ENCODE measurements at regions of chr4 and their contacts with region 1.

Region 1: DNA sequence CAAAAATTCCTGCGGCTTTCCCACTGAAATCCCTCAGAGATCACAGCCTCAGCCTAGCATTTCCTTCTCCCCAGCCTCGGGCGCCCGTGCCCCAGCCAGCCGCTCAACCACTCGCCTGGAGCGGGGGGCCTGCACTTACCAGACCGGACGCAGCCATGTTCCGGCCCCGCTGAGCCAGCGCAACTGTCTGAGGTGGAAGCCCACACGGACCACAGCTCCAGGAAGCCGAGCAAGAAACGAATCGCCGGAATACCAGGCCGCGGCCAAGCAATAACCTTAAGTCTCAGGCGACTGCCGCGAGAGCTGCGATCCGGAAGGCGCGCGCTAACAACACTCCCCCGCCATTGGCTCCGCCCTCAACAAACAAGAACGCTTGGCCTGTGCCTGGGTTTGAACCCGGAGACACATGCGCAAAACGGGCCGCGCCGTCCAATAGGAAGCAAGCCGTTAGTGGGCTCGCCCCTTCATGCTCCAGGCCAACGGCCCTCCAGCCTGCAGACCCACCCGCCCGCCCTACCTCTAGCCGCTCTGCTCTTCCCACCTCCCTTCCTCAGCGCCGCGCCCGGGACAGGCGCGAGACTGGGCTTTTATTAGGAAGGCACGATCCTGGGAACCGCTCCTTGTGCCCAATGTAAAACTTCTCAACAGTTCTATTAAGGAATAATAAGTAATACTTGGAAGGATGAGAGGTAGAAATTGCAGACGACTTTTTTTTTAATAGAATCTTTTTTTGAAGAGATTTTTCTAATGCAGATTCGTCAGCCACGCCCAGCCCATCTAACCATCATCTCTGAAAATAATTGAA is at the start of gene CENPC:
- H3K4me3 Mint-ChIP-seq: peak within 1 kb of the TSS; percentile 98
- H3K27ac Mint-ChIP-seq: peak within 1 kb of the TSS; percentile 99
- H3K4me1 Mint-ChIP-seq: peaks cover 21% of the 10 kb centered on the region
- H3K27me3 Mint-ChIP-seq: no peaks in the 10 kb centered on the region

Region 2: GRCh38 chr4:67603310-67604028 is 58.1 kb after region 1 on chr4:
- intact Hi-C with region 1: no loop called
- H3K4me3 Mint-ChIP-seq: no peak overlapping the region
- H3K27ac Mint-ChIP-seq: no peak overlapping the region
- H3K4me1 Mint-ChIP-seq: no peaks in the 10 kb centered on the region
- H3K27me3 Mint-ChIP-seq: no peaks in the 10 kb centered on the region

Region 3: GRCh38 chr4:67632492-67632891 is 87.1 kb after region 1 on chr4:
- intact Hi-C with region 1: loop called (anchors 5 kb)
- H3K4me3 Mint-ChIP-seq: peak overlapping the region; percentile 20
- H3K27ac Mint-ChIP-seq: peak overlapping the region; percentile 81
- H3K4me1 Mint-ChIP-seq: peaks cover 9% of the 10 kb centered on the region
- H3K27me3 Mint-ChIP-seq: no peaks in the 10 kb centered on the region

Region 4: DNA sequence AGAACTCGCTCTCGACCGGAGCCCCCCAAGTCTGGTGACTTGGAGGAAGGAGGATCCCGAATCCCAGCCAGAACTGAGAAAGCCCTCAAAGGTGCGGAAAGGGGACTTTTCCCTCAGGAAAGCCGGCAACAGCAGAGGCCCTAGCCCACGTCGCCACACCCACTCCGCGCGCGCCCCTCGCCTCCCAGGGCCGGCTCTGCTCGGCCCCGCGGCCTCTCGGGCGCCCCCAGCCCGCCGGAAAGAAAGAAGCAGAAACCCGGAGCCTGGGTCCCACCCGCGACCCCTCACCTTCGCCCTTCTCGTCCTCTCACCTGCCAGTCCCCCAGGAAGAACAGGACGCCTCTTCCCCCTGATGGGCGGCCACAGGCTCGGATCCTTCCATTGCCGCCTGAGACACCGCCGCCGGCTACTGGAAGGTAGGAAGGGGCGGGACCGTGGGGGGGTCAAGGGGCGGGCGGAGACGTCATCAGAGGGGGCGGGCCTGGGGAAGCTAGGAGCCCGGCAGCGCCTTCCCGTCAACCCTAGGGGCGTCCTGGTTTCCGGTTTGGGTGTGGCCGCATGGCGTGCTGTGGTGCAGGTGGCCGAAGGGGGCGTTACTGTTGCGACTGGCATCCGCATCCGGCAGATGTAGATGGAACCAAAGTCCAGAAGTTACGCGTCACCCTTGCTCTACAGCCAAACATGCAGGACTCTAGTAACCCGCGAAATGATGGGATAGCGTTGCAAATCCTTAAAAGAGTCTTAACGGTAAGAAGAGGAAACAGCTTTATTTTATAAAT is 155.5 kb after region 1 on chr4 and contains the start of gene UBA6:
- intact Hi-C with region 1: loop called (anchors 2 kb)
- H3K4me3 Mint-ChIP-seq: peak within 1 kb of the TSS; percentile 92
- H3K27ac Mint-ChIP-seq: peak within 1 kb of the TSS; percentile 93
- H3K4me1 Mint-ChIP-seq: peaks cover 39% of the 10 kb centered on the region
- H3K27me3 Mint-ChIP-seq: no peaks in the 10 kb centered on the region

Region 5: DNA sequence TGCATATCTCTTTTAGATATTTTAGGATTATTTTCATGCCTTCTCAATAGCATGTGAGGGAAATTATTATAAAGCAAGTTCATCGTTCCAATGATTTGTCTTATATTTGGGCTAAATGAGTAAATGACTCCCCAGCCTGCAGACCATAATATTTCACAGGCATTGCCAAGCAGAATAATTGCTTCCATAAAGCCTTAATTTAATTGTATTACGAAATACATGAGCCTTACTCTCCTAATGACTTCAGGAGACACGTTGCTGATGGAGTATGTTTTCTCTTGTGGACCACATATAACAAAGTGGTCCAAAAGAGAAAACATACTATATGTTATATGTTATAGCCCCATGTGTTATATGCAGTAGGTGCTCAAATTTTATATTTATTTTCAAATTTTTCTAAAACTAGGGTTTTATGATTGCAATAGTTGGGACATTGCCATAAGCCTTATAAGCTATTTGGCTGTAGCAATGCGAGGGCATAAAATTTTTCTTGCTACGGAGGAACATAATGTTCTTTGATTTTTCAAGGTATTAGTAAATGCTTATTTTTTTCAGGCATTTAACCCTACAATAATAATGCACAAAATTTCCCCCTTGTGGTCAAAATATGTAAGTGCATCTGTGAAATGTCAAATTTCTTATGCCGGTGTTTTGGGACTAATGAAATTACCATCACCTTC is 364.6 kb after region 1 on chr4:
- intact Hi-C with region 1: loop called (anchors 2 kb)
- H3K4me3 Mint-ChIP-seq: no peak overlapping the region
- H3K27ac Mint-ChIP-seq: no peak overlapping the region
- H3K4me1 Mint-ChIP-seq: no peaks in the 10 kb centered on the region
- H3K27me3 Mint-ChIP-seq: no peaks in the 10 kb centered on the region

Region 6: DNA sequence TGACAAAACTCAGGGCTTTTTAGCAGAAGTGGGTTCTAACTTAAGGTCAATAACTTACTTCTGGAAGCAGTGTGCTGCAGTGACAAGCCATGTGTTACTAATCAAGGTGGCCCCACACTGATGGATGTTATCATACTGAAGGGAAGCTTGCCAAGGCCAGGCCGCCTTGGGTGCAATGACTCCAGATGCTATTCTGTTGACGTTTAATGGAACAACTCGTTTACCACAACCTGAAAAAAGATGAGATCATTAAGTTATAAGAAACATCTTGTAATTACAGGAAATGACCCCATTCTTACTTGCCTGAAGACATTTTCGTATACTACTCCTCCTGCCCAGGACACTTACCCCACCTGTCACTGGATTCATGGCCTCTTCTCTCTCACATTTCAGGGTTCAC is 377.3 kb after region 1 on chr4:
- intact Hi-C with region 1: no loop called
- H3K4me3 Mint-ChIP-seq: no peak overlapping the region
- H3K27ac Mint-ChIP-seq: no peak overlapping the region
- H3K4me1 Mint-ChIP-seq: no peaks in the 10 kb centered on the region
- H3K27me3 Mint-ChIP-seq: no peaks in the 10 kb centered on the region

Region 7: GRCh38 chr4:68349649-68350360 is 804.4 kb after region 1 on chr4 and contains the start of gene YTHDC1:
- intact Hi-C with region 1: loop called (anchors 10 kb)
- H3K4me3 Mint-ChIP-seq: peak within 1 kb of the TSS; percentile 93
- H3K27ac Mint-ChIP-seq: peak within 1 kb of the TSS; percentile 97
- H3K4me1 Mint-ChIP-seq: peaks cover 22% of the 10 kb centered on the region
- H3K27me3 Mint-ChIP-seq: peaks cover 6% of the 10 kb centered on the region